ENCODE measurements at regions of chr6 and their contacts with region 1.

Region 1: GRCh38 chr6:34546551-34547321 is 9.4 kb downstream of the SPDEF start:
- DNase-seq: no peak
- H3K4me3 ChIP-seq: no peak overlapping the region
- H3K27ac ChIP-seq: no peak overlapping the region
- H3K4me1 ChIP-seq: peaks cover 7% of the 10 kb centered on the region
- H3K27me3 ChIP-seq: no peaks in the 10 kb centered on the region
- CTCF ChIP-seq: no peak

Region 2: GRCh38 chr6:34491091-34491430 is 55.7 kb before region 1 on chr6:
- CTCF ChIA-PET with region 1: no interaction called
- dilution Hi-C with region 1: loop called (anchors 5 kb)
- in situ Hi-C with region 1: no loop called
- intact Hi-C with region 1: no loop called
- DNase-seq: no peak
- H3K4me3 ChIP-seq: no peak overlapping the region
- H3K27ac ChIP-seq: no peak overlapping the region
- H3K4me1 ChIP-seq: no peaks in the 10 kb centered on the region
- H3K27me3 ChIP-seq: no peaks in the 10 kb centered on the region
- CTCF ChIP-seq: no peak

Measured in mammary epithelial cell (primary cell).